Dendritic cell treated with granulocyte-macrophage colony-stimulating factor and Interleukin-4, amounts not matched to agents 40 ng/mL and 50 ng/mL, for 4 days (primary cell): ENCODE measurements at regions of chr13 and their contacts with region 1.

Region 1: DNA sequence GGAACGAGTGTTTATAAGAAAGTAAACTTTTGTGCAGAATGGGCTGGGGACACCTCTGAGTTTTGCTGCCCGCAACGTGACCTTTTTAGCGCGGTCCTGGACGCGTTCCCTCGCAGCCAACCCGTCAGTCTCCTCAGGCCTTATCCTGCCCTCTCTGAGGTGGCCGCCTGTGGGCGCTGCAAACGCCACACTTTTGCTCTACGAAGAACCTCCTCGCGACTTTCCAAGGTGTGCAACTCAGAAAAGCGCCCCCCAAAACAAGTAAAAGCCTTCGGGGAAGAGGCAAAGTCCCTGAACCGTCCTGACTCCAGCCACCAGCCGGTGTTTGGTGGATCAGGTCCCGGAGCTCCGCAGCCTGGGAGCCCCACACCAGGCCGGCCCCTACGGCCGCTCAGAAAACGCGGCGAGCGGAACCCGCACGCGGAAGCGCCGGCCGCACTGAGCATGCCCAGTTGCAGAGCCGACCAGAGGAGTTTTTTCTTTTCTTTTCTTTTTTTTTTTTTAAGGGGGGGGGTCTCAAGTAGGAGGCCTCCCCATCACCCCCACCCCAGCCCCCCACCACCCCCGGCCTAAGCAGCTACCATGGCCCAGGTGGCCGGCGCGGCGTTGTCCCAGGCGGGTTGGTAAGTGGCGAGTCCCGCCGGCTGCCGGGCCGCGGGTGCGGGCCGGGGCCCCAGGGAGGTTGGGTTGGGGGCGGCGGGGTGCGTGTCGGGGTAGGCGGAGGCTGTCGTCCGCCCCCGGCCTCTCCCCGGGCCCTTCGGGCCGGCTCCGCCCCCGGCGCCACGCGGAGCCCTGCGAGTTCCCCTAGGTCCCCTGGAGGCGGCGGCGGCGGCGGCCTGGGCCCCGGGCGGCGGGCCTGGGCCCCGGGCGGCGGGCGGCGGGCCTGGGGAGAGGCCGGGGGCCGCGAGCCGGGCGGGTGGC is at the start of gene TDRD3:
- H3K4me3 Mint-ChIP-seq: peak within 1 kb of the TSS; percentile 90
- H3K27ac Mint-ChIP-seq: peak within 1 kb of the TSS; percentile 97
- H3K4me1 Mint-ChIP-seq: peaks cover 16% of the 10 kb centered on the region
- H3K27me3 Mint-ChIP-seq: no peaks in the 10 kb centered on the region

Region 2: DNA sequence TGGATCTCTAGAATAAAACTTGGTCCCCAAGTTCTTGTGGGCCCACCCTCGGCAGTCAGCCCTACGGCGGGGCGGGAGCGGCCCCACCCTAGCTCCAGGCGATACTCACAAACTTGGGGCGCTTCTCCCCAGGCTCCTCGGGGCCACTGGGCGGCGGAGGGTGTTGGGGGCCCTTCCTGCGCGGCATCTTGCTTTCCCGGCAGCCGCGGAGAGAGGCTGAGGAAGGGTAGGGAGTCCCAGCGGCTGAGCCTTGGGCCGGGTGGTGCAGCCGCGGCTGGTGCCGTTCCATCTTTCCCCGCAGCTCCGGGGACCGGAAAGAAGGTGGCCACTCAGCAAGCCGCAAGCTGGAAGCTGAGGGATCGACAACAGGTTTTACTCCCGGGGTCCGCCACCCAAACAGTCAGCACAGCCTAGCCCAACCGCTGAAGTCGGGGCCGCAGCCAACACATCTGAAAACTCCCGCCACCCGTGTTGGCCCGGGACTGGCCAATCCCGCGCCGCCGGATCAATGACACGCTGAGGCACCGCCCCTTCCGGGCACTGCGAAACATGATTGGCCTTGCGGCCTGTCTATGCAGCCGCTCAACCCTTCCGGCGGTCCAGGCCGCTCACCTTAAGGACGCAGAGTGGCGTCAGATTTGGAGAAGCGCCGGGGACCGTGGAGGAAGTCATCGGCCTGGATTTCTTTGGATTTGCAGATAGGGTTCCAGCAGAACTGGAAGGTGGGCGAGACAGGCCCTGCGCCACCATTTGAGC is 233.4 kb before region 1 on chr13 and contains the start of gene DIAPH3:
- intact Hi-C with region 1: loop called (anchors 1 kb)
- H3K4me3 Mint-ChIP-seq: peak within 1 kb of the TSS; percentile 85
- H3K27ac Mint-ChIP-seq: peak within 1 kb of the TSS; percentile 90
- H3K4me1 Mint-ChIP-seq: peaks cover 16% of the 10 kb centered on the region
- H3K27me3 Mint-ChIP-seq: no peaks in the 10 kb centered on the region

Region 3: GRCh38 chr13:60583911-60584753 is 187.1 kb after region 1 on chr13:
- intact Hi-C with region 1: no loop called
- H3K4me3 Mint-ChIP-seq: no peak overlapping the region
- H3K27ac Mint-ChIP-seq: no peak overlapping the region
- H3K4me1 Mint-ChIP-seq: no peaks in the 10 kb centered on the region
- H3K27me3 Mint-ChIP-seq: no peaks in the 10 kb centered on the region